ENCODE measurements at regions of chr2 and their contacts with region 1.

Region 1: GRCh38 chr2:176110975-176111663 is 4.0 kb downstream of the HOXD11 start:
- DNase-seq: no peak
- ATAC-seq: no peak
- H3K4me3 ChIP-seq: no peak overlapping the region
- H3K4me3 Mint-ChIP-seq: no peak overlapping the region
- H3K27ac ChIP-seq: no peak overlapping the region
- H3K27ac Mint-ChIP-seq: no peak overlapping the region
- H3K4me1 ChIP-seq: peaks cover 11% of the 10 kb centered on the region
- H3K4me1 Mint-ChIP-seq: peaks cover 18% of the 10 kb centered on the region
- H3K27me3 ChIP-seq: peaks cover 60 to 75% of the 10 kb centered on the region in 2 experiments
- H3K27me3 Mint-ChIP-seq: peaks cover 74% of the 10 kb centered on the region
- CTCF ChIP-seq: no peak

Region 2: DNA sequence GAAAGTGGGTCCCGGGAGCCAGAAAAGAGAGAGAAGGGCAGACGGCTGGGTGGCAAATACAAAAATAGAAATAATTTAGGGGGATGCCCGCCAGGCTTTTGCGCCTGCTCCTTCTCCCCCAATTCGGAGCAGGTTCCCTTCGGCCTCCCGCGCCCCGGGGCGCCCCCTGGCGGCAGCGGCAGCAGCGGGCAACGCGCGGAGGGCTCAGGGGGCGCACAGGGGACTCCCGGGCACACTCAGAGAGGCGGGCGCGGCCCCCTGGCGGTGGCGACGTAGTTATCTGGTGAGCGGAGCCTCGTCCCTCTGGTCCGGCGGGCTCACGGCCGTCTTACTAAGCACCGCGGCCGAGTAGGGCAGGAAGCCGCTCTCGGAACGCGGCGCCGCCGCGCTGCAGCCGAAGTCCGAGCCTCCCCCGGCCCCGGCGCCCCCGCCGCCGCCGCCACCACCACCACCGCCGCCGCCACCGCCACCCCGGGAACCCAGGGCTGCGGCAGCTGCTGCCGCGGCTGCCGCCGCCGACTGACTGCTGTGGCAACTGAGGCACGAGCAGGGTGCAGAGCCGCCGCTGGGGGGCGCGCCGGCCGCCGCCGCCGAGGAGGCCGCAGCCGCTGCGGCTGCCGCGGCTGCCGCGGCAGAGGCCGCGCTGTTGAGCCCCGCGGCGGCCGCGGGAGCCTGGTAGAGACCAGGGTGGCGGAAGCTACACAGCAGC is 31.1 kb before region 1 on chr2:
- CTCF ChIA-PET with region 1: no interaction called
- POLR2A ChIA-PET with region 1: no interaction called
- intact Hi-C with region 1: loop called (anchors 1 to 2 kb)
- DNase-seq: peak in 2 of 9 experiments; percentile 29 to 43
- ATAC-seq: peak; percentile 31
- H3K4me3 ChIP-seq: no peak overlapping the region
- H3K4me3 Mint-ChIP-seq: peak overlapping the region; percentile 51
- H3K27ac ChIP-seq: no peak overlapping the region
- H3K27ac Mint-ChIP-seq: no peak overlapping the region
- H3K4me1 ChIP-seq: peaks cover 11% of the 10 kb centered on the region
- H3K4me1 Mint-ChIP-seq: peaks cover 12% of the 10 kb centered on the region
- H3K27me3 ChIP-seq: peaks cover 77 to 85% of the 10 kb centered on the region in 2 experiments
- H3K27me3 Mint-ChIP-seq: peaks cover 83% of the 10 kb centered on the region
- CTCF ChIP-seq: no peak